ENCODE measurements at regions of chr9 and their contacts with region 1.

Region 1: GRCh38 chr9:98222885-98223640 is 30.6 kb upstream of the CORO2A start:
- DNase-seq: peak; percentile 99
- H3K4me3 ChIP-seq: no peak overlapping the region
- H3K27ac ChIP-seq: peak overlapping the region; percentile 90
- H3K4me1 ChIP-seq: peaks cover 31% of the 10 kb centered on the region
- H3K27me3 ChIP-seq: no peaks in the 10 kb centered on the region
- CTCF ChIP-seq: no peak

Region 2: DNA sequence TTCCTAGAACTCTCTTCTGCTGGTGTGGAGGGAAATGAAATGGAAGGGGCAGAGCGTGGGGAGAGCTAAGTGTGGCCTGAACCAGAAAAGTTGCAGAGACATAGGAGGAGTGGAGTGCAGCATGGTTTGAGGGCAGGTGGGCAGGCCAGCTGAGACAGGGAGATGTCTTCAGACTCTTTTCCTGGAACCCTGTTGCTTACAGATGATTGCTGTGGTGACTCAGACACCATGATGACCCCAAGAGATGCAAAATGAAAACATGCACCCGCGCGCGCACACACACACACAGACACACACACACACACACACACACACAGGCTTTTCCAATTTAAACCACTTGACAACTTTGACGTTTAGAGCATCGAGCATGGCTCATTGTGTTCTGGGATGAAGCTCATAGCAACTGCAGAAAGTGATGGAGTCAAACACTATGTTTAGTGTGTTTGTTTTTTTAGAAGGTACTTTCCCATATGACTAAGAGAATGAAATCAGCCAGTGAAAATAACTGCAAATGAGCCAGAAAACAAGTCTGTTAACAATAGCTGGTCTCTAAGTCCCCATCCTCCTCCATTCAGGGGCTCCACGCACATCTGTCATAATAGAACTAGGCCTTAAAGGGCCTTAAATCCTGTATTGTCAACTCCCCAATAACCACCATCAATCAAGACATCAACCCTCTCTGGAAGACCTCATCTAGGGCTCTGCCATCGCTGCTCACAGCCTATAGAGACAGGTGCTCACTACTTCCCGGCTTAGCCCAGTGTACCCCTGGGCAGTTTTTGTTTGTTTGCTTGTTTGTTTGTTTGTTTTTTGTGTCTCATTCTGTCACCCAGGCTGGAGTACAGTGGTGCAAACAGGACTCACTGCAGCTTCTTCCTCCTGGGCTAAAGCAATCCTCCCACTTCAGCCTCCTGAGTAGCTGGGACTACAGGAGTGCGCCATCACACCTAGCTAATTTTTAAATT is 712.0 kb before region 1 on chr9:
- CTCF ChIA-PET with region 1: no interaction called
- dilution Hi-C with region 1: no loop called
- in situ Hi-C with region 1: no loop called
- intact Hi-C with region 1: no loop called
- DNase-seq: peak; percentile 66
- H3K4me3 ChIP-seq: no peak overlapping the region
- H3K27ac ChIP-seq: no peak overlapping the region
- H3K4me1 ChIP-seq: no peaks in the 10 kb centered on the region
- H3K27me3 ChIP-seq: no peaks in the 10 kb centered on the region
- CTCF ChIP-seq: no peak

Region 3: GRCh38 chr9:98045234-98046179 is 177.6 kb before region 1 on chr9:
- CTCF ChIA-PET with region 1: no interaction called
- dilution Hi-C with region 1: no loop called
- in situ Hi-C with region 1: no loop called
- intact Hi-C with region 1: no loop called
- DNase-seq: no peak
- H3K4me3 ChIP-seq: no peak overlapping the region
- H3K27ac ChIP-seq: no peak overlapping the region
- H3K4me1 ChIP-seq: no peaks in the 10 kb centered on the region
- H3K27me3 ChIP-seq: no peaks in the 10 kb centered on the region
- CTCF ChIP-seq: no peak

Region 4: DNA sequence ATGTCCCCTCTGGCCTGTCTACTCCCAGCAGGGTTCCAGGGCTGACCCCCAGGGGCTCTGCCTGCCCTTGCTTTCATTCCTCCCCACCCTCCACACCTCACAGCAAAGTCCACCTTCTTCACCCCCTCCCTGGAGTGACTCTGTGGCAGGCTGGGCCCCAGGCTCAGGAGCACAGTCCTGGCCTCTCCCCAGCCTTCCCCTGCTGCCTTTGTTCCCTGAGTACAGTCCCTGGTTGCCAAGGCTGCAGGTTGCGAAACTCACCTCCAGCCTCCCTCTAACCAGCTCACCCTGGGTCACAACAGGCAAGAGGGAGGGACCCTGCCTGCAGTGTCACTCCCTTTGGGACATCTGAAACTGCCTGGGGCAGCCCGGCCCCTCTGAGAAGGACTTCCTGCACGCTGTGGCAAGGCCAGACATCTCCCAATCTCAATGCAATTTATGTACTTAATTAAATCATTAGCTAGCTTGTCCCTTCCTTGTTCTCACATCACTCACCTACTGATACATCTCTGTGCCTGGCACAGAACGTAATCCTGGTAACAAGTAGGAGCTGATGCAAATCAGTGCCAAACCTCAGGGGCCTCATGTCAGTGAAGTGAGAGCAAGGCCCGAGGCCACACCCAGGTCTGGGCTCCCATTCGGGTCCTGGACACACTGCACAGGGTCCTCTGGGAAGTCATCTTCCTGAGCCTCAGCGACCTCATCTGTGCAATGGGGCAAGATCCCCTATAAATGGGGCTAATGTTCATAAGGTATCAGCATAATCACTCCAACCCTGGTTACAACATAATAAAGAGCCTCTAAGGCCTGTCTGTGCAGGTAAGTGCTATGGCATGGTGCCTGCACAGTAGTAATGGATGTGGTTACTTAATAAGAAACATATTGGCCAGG is 76.7 kb before region 1 on chr9:
- CTCF ChIA-PET with region 1: no interaction called
- dilution Hi-C with region 1: no loop called
- in situ Hi-C with region 1: no loop called
- intact Hi-C with region 1: loop called (anchors 1 kb)
- DNase-seq: peak; percentile 84
- H3K4me3 ChIP-seq: no peak overlapping the region
- H3K27ac ChIP-seq: peak overlapping the region; percentile 78
- H3K4me1 ChIP-seq: peaks cover 26% of the 10 kb centered on the region
- H3K27me3 ChIP-seq: no peaks in the 10 kb centered on the region
- CTCF ChIP-seq: no peak

Region 5: DNA sequence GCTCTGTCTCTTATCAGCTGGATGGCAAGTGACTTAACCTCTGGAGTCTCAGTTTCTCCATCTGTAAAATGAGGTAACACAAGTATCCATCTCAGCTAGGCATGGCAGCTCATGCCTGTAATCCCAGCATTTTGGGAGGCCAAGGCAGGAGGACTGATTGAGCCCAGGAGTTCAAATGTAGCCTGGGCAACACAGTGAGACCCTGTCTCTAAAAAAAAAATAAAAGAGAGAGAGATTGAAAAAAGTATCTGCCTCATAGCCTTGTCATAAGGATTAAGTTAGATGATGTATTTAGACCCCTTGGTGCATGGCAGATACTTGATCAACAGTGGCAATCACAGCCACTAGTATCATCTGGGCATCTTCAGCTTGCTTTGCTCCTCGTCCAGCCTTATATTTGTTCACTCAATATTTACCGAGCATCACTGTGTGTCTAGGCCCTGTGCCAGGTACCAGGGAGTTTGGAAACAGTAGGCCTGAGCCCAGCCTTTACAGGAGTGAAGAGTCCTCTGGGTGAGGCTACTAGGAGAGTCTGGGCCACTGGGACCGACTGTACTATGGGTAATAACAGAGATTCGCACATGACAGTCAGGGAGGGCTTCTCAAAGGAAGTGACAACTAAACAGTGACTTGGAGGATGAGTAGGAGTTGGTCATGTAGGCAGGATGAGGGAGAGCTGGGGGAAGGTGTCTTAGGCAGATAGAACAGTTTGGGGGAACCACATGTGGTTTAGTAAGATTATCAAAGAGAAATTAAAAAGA is 64.8 kb before region 1 on chr9:
- CTCF ChIA-PET with region 1: no interaction called
- dilution Hi-C with region 1: no loop called
- in situ Hi-C with region 1: no loop called
- intact Hi-C with region 1: loop called (anchors 2 kb)
- DNase-seq: no peak
- H3K4me3 ChIP-seq: no peak overlapping the region
- H3K27ac ChIP-seq: no peak overlapping the region
- H3K4me1 ChIP-seq: peaks cover 13% of the 10 kb centered on the region
- H3K27me3 ChIP-seq: no peaks in the 10 kb centered on the region
- CTCF ChIP-seq: no peak

Region 6: DNA sequence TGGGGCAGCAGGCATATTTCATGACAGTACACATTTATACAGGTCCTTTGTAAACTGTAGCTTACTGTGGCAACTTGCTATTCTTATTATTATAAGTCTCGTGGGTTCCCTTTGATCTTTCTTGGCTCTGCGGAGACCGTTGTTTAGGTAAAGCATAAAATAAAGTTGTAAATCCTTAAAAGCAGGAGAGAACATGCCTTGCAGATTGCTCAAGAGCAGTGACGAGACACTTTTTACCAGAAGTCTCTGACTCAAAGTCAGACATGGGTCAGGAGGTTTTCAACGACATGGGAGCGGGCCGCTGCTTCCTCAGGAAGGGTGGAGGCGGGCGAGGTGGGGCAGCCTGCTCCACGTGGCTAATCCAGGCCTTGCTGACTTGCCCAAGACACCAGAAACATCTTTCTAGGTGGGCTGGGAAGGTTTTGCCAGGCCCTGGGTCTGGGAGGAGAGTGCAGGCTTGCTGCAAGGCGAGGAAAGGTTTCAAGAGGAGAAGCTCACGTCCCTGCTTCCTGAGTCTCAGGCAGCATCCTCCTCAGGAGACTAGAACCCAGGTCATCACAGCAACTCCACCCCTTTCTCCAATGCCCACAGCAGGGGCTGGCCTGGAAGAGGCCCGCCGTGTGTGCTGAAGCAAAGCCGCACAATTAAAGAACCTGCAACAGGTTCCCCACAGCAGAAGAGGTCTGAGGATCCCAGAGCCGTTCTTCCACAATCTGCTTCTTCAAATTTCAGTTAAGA is 25.8 kb after region 1 on chr9:
- CTCF ChIA-PET with region 1: no interaction called
- dilution Hi-C with region 1: no loop called
- in situ Hi-C with region 1: no loop called
- intact Hi-C with region 1: loop called (anchors 1 kb)
- DNase-seq: peak; percentile 97
- H3K4me3 ChIP-seq: no peak overlapping the region
- H3K27ac ChIP-seq: peak overlapping the region; percentile 78
- H3K4me1 ChIP-seq: peaks cover 72% of the 10 kb centered on the region
- H3K27me3 ChIP-seq: no peaks in the 10 kb centered on the region
- CTCF ChIP-seq: no peak

Region 7: GRCh38 chr9:98280574-98280973 is 57.5 kb after region 1 on chr9:
- CTCF ChIA-PET with region 1: no interaction called
- dilution Hi-C with region 1: loop called (anchors 5 kb)
- in situ Hi-C with region 1: no loop called
- intact Hi-C with region 1: no loop called
- DNase-seq: no peak
- H3K4me3 ChIP-seq: no peak overlapping the region
- H3K27ac ChIP-seq: no peak overlapping the region
- H3K4me1 ChIP-seq: no peaks in the 10 kb centered on the region
- H3K27me3 ChIP-seq: peaks cover 2% of the 10 kb centered on the region
- CTCF ChIP-seq: no peak

Measured in mammary epithelial cell (primary cell).